ENCODE measurements at regions of chr3 and their contacts with region 1.

Region 1: DNA sequence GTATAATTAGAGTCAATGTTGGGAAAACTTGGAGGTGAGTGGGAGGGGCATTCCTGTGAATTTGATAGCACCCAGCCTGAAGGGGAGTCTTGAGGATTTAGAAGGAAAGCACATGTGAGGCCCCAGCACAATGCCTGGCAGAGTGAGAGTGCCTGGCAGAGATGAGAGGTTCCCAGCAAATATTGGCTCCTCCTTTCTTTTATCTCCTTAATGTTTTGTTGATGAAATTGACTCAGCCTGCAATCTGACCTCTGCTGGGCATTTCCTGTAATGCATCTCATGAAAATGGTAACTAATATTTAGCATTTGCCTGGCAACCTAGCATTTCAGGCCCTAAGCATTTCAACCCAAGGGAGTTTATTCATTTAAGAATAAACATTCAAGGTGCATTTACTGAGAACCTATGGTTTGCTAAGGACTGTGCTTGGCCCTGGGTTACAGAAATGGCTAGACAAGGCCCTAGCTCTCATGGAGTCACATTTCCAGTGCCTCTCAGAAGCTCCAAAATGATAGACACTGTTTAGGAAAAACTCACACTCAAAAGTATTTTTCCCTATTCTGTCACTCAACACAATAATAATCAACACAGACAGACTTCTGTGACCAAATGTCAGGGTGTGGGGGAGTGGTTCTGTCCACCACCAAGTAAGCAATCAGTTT is 19.0 kb downstream of the PDHB start:
- ATAC-seq: peak in 7 of 8 experiments; percentile 36 to 93 (median 79)
- H3K4me3 ChIP-seq: no peak overlapping the region
- H3K27ac ChIP-seq: no peak overlapping the region
- H3K4me1 ChIP-seq: no peaks in the 10 kb centered on the region

Region 2: DNA sequence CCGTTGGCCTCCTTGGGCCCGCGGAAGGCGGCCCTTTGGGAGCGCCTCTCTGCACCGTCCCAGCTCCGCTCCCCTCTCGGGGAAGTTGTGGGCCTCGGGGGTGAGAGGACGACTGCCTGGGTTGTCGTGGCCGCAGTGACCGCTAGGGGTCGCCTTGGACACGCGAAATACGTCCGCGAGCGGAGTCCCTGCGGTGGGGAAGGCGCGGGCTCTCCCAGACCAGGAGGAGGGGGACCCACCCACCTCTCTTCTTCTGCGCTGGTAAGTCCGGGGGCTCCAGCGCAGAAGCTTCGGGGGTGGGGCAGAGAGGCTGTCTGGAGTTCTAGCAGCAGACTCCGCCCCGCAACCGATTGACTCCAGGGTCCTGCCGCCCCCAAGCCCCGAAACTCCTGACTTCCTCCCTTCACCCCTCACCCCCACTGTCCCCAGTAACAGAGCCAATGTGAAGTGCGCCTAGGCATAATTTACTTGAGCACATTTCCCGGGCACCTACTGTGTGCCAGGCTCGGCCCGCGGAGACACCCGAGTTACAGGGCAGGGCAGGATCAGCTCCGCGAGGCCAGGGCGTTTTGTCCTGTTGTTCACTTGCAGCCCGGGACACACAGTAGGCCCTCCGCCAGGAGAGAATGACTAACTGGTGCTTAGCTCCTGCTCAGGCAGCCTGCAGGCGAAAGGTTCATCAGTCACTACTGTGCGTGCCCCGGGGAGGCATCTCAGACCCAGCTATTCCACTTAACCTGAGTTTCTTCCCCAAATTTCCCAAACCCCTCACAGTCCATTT is 236.7 kb before region 1 on chr3:
- in situ Hi-C with region 1: loop called in 1 of 9 experiments (anchors 25 kb)
- ATAC-seq: peak; percentile 41 to 95 (median 86)
- H3K4me3 ChIP-seq: peak overlapping the region; percentile 24 to 39 (median 27)
- H3K27ac ChIP-seq: no peak overlapping the region
- H3K4me1 ChIP-seq: peaks cover 2 to 4% of the 10 kb centered on the region in 2 donors

Region 3: DNA sequence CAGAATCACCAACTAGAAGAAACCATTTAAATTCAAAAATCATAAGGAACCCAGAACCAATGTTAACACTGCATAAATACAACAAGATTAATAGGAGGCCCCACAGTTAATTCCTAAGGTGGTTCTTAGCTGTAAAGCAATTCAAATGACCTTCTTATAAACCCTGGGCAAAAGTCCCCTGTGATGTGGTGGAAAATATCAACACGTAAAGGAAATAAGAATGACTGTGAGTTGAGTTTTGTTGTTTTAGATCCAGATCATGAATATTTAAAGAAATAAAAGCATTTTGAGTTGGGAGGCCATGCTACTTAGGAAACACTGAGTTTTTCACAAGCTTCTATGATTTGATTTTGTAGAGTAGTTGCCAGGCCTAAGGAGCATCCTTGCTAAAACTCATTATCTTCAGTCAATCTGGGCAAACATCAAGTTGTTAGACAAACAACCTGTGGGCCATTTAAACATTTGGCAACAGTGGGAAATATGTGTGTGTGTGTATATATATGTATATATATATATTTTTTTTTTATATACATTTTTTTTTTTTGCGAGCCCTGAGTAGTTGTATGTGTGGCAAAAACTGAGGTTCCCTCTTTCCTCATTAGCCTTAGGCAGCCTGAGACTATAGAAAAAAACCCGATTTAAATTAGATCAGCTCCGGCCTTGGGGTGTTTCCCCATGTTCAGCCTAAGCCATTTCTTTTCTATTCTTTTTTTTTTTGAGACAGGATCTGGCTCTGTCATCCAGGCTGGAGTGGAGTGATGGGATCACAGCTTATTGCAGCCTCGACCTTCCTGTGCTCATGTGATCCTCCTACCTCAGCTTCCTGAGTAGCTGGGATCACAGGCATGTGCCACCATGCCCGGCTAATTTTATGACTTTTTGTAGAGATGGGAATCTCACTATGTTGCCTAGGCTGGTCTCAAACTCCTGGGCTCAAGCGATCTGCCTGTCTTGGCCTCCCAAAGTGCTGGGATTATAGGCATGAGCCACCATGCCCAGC is 90.0 kb before region 1 on chr3:
- in situ Hi-C with region 1: loop called in 2 of 9 experiments (anchors 10 to 25 kb)
- ATAC-seq: peak in 1 of 8 experiments; percentile 30
- H3K4me3 ChIP-seq: no peak overlapping the region
- H3K27ac ChIP-seq: peak overlapping the region in 1 of 2 donors; percentile 9
- H3K4me1 ChIP-seq: peaks cover 3 to 13% of the 10 kb centered on the region in 2 donors